Activated CD4-positive, alpha-beta T cell treated with anti-CD3 and anti-CD28 coated beads, Interleukin-2, amount 10 ng/mL, durations not matched to agents 7 days and 5 days (primary cell): ENCODE measurements at regions of chr3 and their contacts with region 1.

Region 1: DNA sequence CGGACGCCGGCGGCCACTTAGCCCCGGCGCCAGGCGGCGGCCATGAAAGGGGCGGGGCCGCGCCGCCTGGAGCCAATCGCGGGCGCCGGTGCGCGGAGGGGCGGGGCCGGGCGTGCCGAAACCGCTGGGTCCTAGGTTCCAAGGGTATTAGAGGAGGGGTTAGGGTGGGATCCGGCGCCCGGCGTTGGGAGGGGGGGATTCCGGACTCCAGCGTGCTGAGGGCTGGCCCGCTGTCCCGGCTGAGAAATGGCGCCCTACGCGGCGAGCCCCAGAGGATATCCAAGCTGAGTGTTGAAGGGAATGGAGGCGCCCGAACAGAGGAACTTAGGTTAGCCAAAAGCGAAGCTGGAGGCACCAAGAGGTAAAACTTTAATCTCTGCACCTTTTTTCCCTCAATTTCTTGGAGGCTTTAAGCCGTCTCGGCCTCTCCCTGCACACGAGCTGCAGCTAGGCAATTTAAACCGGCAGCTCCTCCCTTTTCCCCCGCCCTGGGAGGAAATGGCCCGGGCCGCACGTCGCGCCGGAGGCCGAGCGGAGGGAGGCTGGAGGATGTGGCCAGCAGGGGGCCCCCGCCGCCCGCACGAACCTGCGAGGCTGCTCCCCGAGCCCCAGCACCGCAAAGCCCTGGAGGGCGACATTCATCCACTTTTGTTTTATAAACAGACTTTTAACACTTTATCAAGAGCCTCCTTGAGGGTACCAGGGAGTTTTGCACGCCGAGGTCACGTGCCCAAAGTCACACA is at the start of gene XXYLT1:
- DNase-seq: peak; percentile 90
- H3K4me3 Mint-ChIP-seq: peak within 1 kb of the TSS; percentile 87
- H3K27ac Mint-ChIP-seq: peak within 1 kb of the TSS; percentile 92
- H3K4me1 Mint-ChIP-seq: peaks cover 22% of the 10 kb centered on the region
- H3K27me3 Mint-ChIP-seq: no peaks in the 10 kb centered on the region
- total RNA-seq, gene XXYLT1: 7.7 to 7.8 TPM

Region 2: GRCh38 chr3:194671900-194672808 is 599.1 kb before region 1 on chr3 and contains the start of gene LSG1:
- CTCF ChIA-PET with region 1: interaction called, 27 read pairs
- POLR2A ChIA-PET with region 1: no interaction called
- DNase-seq: peak; percentile 92
- H3K4me3 Mint-ChIP-seq: peak within 1 kb of the TSS; percentile 96
- H3K27ac Mint-ChIP-seq: peak within 1 kb of the TSS; percentile 99
- H3K4me1 Mint-ChIP-seq: peaks cover 44% of the 10 kb centered on the region
- H3K27me3 Mint-ChIP-seq: peaks cover 5% of the 10 kb centered on the region
- total RNA-seq, gene LSG1: 42.5 to 44.6 TPM

Region 3: GRCh38 chr3:195204360-195205163 is 66.7 kb before region 1 on chr3:
- CTCF ChIA-PET with region 1: no interaction called
- POLR2A ChIA-PET with region 1: no interaction called
- DNase-seq: no peak
- H3K4me3 Mint-ChIP-seq: no peak overlapping the region
- H3K27ac Mint-ChIP-seq: no peak overlapping the region
- H3K4me1 Mint-ChIP-seq: peaks cover 7% of the 10 kb centered on the region
- H3K27me3 Mint-ChIP-seq: no peaks in the 10 kb centered on the region

Region 4: DNA sequence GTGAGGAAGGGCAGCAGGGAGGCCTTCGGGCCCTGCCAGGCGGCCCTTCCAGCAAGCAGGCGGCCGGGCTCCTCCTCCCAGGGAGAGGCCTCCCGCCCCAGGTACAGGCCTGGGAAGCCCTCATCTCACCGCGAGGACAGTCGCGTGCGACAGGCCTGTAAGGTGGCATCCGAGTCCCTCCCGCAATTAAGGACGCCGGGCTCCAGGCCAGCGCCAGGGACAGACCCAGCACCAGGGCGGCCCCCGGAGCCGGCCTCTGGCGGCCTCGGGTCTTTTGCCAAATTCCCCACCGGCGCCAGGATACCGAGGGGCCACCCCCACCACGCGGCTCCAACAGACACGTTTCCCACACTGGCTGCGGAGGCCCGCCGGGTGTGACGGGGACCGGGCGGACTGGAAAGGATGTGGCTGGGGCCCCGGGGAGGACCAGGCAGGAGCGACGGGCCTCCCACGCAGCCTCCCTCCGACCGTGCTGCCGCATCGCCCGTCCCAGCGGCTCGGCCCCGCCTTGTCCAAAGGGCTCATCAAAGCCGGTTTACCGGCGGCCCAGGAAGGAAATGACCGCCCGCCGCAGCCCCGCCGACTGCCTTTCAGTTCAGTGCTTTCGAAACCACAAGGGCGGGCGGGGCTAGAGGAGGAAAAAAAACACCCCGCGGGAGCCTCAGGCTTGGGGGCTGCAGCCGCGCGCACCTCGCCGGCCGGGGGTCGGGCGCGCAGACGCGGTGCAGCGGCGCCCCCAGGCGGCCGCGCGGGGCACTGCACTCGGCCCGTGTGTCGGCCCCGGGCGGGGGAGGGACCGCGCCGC is 11.6 kb before region 1 on chr3:
- CTCF ChIA-PET with region 1: interaction called, 48 read pairs
- POLR2A ChIA-PET with region 1: no interaction called
- DNase-seq: peak; percentile 86
- H3K4me3 Mint-ChIP-seq: peak overlapping the region; percentile 34
- H3K27ac Mint-ChIP-seq: no peak overlapping the region
- H3K4me1 Mint-ChIP-seq: peaks cover 38% of the 10 kb centered on the region
- H3K27me3 Mint-ChIP-seq: no peaks in the 10 kb centered on the region

Region 5: GRCh38 chr3:195517030-195517429 is 245.7 kb after region 1 on chr3:
- CTCF ChIA-PET with region 1: interaction called, 68 read pairs
- POLR2A ChIA-PET with region 1: no interaction called
- DNase-seq: no peak
- H3K4me3 Mint-ChIP-seq: no peak overlapping the region
- H3K27ac Mint-ChIP-seq: no peak overlapping the region
- H3K4me1 Mint-ChIP-seq: peaks cover 10% of the 10 kb centered on the region
- H3K27me3 Mint-ChIP-seq: no peaks in the 10 kb centered on the region

Region 6: GRCh38 chr3:195542698-195543499 is 271.6 kb after region 1 on chr3 and contains the start of gene PPP1R2:
- CTCF ChIA-PET with region 1: interaction called, 23 read pairs
- POLR2A ChIA-PET with region 1: interaction called, 3 read pairs
- DNase-seq: peak; percentile 91
- H3K4me3 Mint-ChIP-seq: peak within 1 kb of the TSS; percentile 86
- H3K27ac Mint-ChIP-seq: peak within 1 kb of the TSS; percentile 94
- H3K4me1 Mint-ChIP-seq: peaks cover 71% of the 10 kb centered on the region
- H3K27me3 Mint-ChIP-seq: no peaks in the 10 kb centered on the region
- total RNA-seq, gene PPP1R2: 85.9 to 94.3 TPM